Activated CD8-positive, alpha-beta T cell treated with anti-CD3 and anti-CD28 coated beads, Interleukin-2, amount 10 ng/mL, durations not matched to agents 7 days and 5 days (primary cell): ENCODE measurements at regions of chr17 and their contacts with region 1.

Region 1: DNA sequence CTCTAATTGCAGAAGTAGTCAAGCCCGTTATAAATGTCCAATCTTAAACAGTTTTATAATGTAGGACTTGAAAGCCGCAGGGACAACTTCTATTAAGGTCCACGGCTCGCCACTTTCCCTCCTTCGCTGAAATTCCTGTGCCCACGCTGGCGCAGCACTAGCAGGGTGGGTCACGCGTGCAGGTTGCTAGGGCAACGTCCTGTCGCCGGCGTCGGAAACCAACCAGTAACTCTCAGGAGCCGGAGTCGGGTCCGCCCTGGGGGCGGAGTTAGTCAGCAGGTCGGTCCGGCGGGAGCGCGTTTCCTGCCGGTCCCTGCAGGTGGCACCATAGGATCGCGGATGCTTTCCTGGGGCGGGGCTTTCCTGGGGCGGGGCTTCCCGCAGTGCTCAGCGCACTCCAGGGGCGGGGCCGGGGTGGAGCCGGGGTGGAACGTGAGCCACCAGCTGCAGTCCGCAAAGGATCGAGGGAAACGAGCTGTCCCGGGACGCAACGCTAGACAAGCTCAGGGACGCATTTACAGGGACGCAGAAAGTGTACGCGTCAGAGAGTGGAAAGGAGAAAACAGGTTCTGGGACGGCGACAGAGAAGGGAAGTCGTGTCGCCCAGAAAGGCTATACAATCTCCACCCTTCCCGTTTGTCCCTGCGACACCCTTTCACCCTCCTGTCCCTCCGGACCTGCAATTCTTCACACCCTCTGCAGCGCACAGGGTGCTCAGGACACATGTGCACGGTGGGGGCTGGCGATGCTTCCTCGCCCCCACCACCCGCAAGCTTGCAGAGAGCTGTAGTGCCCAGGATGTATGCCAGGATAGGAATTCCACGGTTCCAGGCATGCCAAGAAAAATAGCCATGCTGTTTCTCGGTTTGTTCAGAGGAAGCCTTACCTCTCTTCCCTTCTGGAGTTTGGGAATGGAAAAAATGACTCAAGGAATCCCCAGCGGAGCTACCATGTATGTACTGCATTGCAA is 12.4 kb downstream of the COPZ2 start:
- DNase-seq: peak; percentile 98
- ATAC-seq: peak; percentile 92
- H3K4me3 Mint-ChIP-seq: peak overlapping the region; percentile 80
- H3K27ac Mint-ChIP-seq: peak overlapping the region; percentile 71
- H3K4me1 Mint-ChIP-seq: peaks cover 33% of the 10 kb centered on the region
- H3K27me3 Mint-ChIP-seq: peaks cover 17% of the 10 kb centered on the region

Region 2: DNA sequence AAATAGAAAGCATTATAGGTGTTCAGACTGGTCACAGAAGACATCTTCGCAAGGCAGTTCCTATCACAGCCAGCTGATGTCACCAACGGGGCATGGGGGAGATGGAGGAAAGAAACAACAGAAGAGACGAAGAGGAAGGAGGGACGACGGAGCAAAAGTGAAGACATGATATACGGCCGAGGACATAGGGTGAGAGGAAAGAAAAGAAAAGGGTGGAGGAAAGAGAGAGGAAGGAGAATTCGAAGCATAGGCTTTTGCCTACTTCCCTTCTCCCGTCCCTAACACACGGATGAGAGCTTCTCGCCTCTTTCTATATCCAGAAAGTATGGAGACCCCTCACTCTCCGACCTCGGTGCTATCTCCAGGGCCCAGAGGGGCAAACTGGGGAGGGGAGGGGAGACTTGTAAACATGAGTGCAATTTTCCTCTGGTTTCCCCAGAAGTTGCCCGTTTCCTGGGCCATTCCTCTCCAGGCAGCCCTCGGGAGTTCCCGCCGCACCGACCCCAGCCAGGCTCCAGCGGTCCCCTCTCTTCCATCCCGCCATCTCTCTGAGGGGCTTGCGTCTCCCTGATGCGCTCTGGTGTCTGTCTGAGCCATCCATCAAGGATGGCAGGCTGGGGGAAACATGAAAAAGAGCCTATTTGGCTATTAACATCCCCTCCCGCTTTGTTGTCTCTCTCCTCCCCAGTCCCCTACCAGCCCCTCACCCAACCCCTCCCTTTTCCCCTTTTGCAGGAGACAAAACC is 13.6 kb before region 1 on chr17:
- CTCF ChIA-PET with region 1: interaction called, 14 read pairs
- POLR2A ChIA-PET with region 1: no interaction called
- DNase-seq: peak; percentile 74
- ATAC-seq: peak; percentile 77
- H3K4me3 Mint-ChIP-seq: peak overlapping the region; percentile 63
- H3K27ac Mint-ChIP-seq: no peak overlapping the region
- H3K4me1 Mint-ChIP-seq: peaks cover 22% of the 10 kb centered on the region
- H3K27me3 Mint-ChIP-seq: peaks cover 44% of the 10 kb centered on the region

Region 3: DNA sequence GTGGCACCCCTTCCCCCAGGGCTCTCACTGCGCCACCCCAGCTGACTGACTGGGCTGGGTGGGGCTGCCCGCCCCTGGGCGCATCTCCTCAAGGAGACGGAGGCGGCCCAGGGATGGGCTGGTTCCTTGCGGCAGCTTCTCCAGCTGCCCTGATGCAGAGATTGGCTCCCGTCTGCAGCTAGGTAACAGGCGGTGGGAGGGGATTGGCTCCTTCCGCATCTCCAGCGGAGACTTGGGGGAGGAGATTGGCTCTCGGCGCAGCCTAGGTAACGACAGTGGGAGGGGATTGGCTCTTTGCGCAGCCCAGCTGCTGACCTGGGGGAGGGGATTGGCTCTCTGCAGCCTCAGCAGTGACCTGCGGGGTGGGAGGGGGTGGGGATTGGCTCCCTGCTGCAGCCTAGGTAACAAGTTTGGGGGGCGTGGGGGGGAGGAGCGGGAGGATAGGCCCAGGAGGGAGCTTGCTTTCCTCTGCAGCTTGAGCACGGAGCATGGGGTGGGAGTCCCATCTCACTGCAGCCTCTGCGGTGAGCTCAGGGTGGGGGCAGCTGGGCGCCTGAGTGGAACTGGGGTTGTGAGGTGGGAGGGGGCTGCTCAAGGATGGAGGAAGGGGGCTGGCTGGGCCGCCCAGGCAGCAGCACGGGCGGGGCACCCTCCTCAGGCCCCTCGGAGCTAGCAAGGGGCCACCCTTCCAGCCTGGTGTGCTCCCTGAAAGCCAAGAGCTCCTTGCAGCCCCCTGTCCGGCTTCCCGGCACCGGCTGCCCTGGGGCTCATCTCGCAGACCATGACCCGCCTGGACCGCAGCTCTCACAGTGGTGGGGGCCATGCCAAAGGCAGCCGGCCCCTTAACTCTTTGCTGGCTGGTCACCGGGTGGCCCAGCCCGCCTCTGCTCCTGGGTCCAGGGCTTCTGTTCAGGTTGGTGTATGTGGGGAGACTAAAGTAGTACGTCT is 29.3 kb after region 1 on chr17:
- CTCF ChIA-PET with region 1: interaction called, 113 read pairs
- POLR2A ChIA-PET with region 1: interaction called, 4 read pairs
- DNase-seq: no peak
- ATAC-seq: no peak
- H3K4me3 Mint-ChIP-seq: no peak overlapping the region
- H3K27ac Mint-ChIP-seq: peak overlapping the region; percentile 74
- H3K4me1 Mint-ChIP-seq: peaks cover 62% of the 10 kb centered on the region
- H3K27me3 Mint-ChIP-seq: no peaks in the 10 kb centered on the region

Region 4: GRCh38 chr17:48084932-48085444 is 59.8 kb after region 1 on chr17:
- CTCF ChIA-PET with region 1: interaction called, 50 read pairs
- POLR2A ChIA-PET with region 1: no interaction called
- DNase-seq: no peak
- ATAC-seq: no peak
- H3K4me3 Mint-ChIP-seq: no peak overlapping the region
- H3K27ac Mint-ChIP-seq: no peak overlapping the region
- H3K4me1 Mint-ChIP-seq: peaks cover 7% of the 10 kb centered on the region
- H3K27me3 Mint-ChIP-seq: no peaks in the 10 kb centered on the region

Region 5: GRCh38 chr17:48113201-48113676 is 88.0 kb after region 1 on chr17:
- CTCF ChIA-PET with region 1: interaction called, 33 read pairs
- POLR2A ChIA-PET with region 1: no interaction called
- DNase-seq: peak; percentile 81
- ATAC-seq: peak; percentile 93
- H3K4me3 Mint-ChIP-seq: peak overlapping the region; percentile 32
- H3K27ac Mint-ChIP-seq: peak overlapping the region; percentile 96
- H3K4me1 Mint-ChIP-seq: peaks cover 46% of the 10 kb centered on the region
- H3K27me3 Mint-ChIP-seq: no peaks in the 10 kb centered on the region

Region 6: GRCh38 chr17:48593840-48594537 is 568.8 kb after region 1 on chr17:
- CTCF ChIA-PET with region 1: interaction called, 12 read pairs
- POLR2A ChIA-PET with region 1: no interaction called
- DNase-seq: peak; percentile 86
- ATAC-seq: peak; percentile 65
- H3K4me3 Mint-ChIP-seq: peak overlapping the region; percentile 76
- H3K27ac Mint-ChIP-seq: peak overlapping the region; percentile 23
- H3K4me1 Mint-ChIP-seq: peaks cover 44% of the 10 kb centered on the region
- H3K27me3 Mint-ChIP-seq: peaks cover 76% of the 10 kb centered on the region